Heart left ventricle (tissue), 16 donors: ENCODE measurements at regions of chr5 and their contacts with region 1.

Region 1: GRCh38 chr5:68484307-68485068 is 268.9 kb downstream of the PIK3R1 start:
- DNase-seq: no peak
- ATAC-seq: no peak
- H3K4me3 ChIP-seq: no peak overlapping the region
- H3K27ac ChIP-seq: no peak overlapping the region
- H3K4me1 ChIP-seq: peaks cover 0 to 3% (median 0%) of the 10 kb centered on the region in 12 donors
- H3K27me3 ChIP-seq: no peaks in the 10 kb centered on the region
- CTCF ChIP-seq: no peak
- POLR2A ChIP-seq: no peak

Region 2: DNA sequence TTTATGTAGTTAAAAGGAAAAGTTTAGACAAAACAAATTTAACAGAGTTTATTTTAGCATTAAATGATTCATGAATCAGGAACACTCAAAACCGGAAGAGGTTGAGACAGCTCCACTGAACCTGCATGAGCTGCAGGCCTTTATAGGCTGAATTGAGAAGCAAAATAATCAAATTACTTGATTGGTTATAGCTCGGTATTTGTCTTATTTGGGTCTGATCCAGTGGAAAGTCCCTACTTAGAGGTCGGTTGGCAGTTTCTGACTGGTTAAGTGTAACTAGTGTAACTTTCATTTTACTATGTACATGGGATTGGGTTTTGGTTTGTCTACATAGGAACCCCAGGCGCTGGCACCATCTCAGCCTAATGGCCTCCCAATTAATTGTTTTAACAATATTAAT is 343.0 kb before region 1 on chr5:
- intact Hi-C with region 1: no loop called
- DNase-seq: no peak
- ATAC-seq: no peak
- H3K4me3 ChIP-seq: no peak overlapping the region
- H3K27ac ChIP-seq: no peak overlapping the region
- H3K4me1 ChIP-seq: peaks cover 0 to 12% (median under 1%) of the 10 kb centered on the region in 12 donors
- H3K27me3 ChIP-seq: no peaks in the 10 kb centered on the region
- CTCF ChIP-seq: no peak
- POLR2A ChIP-seq: no peak

Region 3: GRCh38 chr5:68534131-68534940 is 49.8 kb after region 1 on chr5:
- intact Hi-C with region 1: loop called in 1 of 10 experiments (anchors 5 kb)
- DNase-seq: no peak
- ATAC-seq: peak; percentile 45 to 74 (median 70)
- H3K4me3 ChIP-seq: peak overlapping the region in 8 of 12 donors; percentile 1 to 35 (median 15)
- H3K27ac ChIP-seq: peak overlapping the region in 9 of 12 donors; percentile 19 to 60 (median 44)
- H3K4me1 ChIP-seq: peaks cover 0 to 30% (median 15%) of the 10 kb centered on the region in 12 donors
- H3K27me3 ChIP-seq: no peaks in the 10 kb centered on the region
- CTCF ChIP-seq: no peak
- POLR2A ChIP-seq: no peak